ENCODE measurements at regions of chr22 and their contacts with region 1.

Region 1: GRCh38 chr22:27474711-27475547 is 326.6 kb downstream of the MN1 start:
- DNase-seq: peak; percentile 100
- H3K4me3 ChIP-seq: peak overlapping the region in 1 of 3 experiments; percentile 4
- H3K27ac ChIP-seq: peak overlapping the region; percentile 99
- H3K4me1 ChIP-seq: peaks cover 44% of the 10 kb centered on the region
- H3K27me3 ChIP-seq: no peaks in the 10 kb centered on the region
- CTCF ChIP-seq: peak in 1 of 2 donors; percentile 10

Region 2: GRCh38 chr22:27107824-27108223 is 367.1 kb before region 1 on chr22:
- CTCF ChIA-PET with region 1: no interaction called
- dilution Hi-C with region 1: no loop called
- in situ Hi-C with region 1: no loop called
- intact Hi-C with region 1: loop called (anchors 2 kb)
- DNase-seq: peak; percentile 94
- H3K4me3 ChIP-seq: no peak overlapping the region
- H3K27ac ChIP-seq: no peak overlapping the region
- H3K4me1 ChIP-seq: no peaks in the 10 kb centered on the region
- H3K27me3 ChIP-seq: peaks cover 47% of the 10 kb centered on the region
- CTCF ChIP-seq: no peak

Region 3: GRCh38 chr22:27283714-27284113 is 191.2 kb before region 1 on chr22:
- CTCF ChIA-PET with region 1: no interaction called
- dilution Hi-C with region 1: no loop called
- in situ Hi-C with region 1: no loop called
- intact Hi-C with region 1: no loop called
- DNase-seq: no peak
- H3K4me3 ChIP-seq: no peak overlapping the region
- H3K27ac ChIP-seq: no peak overlapping the region
- H3K4me1 ChIP-seq: no peaks in the 10 kb centered on the region
- H3K27me3 ChIP-seq: no peaks in the 10 kb centered on the region
- CTCF ChIP-seq: no peak

Region 4: GRCh38 chr22:27420817-27421361 is 54.0 kb before region 1 on chr22:
- CTCF ChIA-PET with region 1: interaction called, 3 read pairs
- dilution Hi-C with region 1: loop called (anchors 5 kb)
- in situ Hi-C with region 1: no loop called
- intact Hi-C with region 1: loop called (anchors 1 kb)
- DNase-seq: peak; percentile 82
- H3K4me3 ChIP-seq: no peak overlapping the region
- H3K27ac ChIP-seq: peak overlapping the region; percentile 52
- H3K4me1 ChIP-seq: peaks cover 44% of the 10 kb centered on the region
- H3K27me3 ChIP-seq: no peaks in the 10 kb centered on the region
- CTCF ChIP-seq: no peak

Region 5: GRCh38 chr22:27461470-27461869 is 13.5 kb before region 1 on chr22:
- CTCF ChIA-PET with region 1: interaction called, 5 read pairs
- dilution Hi-C with region 1: no loop called
- in situ Hi-C with region 1: no loop called
- intact Hi-C with region 1: loop called (anchors 1 kb)
- DNase-seq: peak; percentile 68
- H3K4me3 ChIP-seq: no peak overlapping the region
- H3K27ac ChIP-seq: no peak overlapping the region
- H3K4me1 ChIP-seq: peaks cover 39% of the 10 kb centered on the region
- H3K27me3 ChIP-seq: no peaks in the 10 kb centered on the region
- CTCF ChIP-seq: no peak

Region 6: DNA sequence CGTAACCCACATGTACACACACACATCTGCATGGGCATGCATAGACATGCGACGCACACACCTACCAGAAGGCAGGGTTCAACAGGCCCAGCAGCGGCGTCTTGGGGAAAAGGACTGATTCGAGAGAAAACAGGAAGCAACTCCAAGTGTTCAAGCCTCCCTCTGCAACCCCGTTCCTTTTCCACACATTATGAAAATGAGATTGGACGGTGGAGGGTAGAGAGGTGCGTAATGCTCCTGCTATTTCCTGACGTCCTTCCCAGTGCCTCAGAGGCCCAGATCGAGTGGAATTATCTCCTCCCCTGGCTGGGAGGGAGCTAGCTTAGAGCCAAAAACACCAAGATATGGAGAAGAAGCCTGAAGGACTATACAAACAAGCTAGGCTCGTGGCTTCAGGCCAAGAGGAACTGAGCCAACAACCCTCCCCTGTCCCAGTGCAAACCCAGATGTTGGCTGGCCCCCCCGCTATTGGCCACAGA is 37.4 kb after region 1 on chr22:
- CTCF ChIA-PET with region 1: no interaction called
- dilution Hi-C with region 1: no loop called
- in situ Hi-C with region 1: no loop called
- intact Hi-C with region 1: loop called (anchors 1 kb)
- DNase-seq: peak; percentile 98
- H3K4me3 ChIP-seq: peak overlapping the region in 2 of 3 experiments; percentile 14 to 21
- H3K27ac ChIP-seq: peak overlapping the region; percentile 81
- H3K4me1 ChIP-seq: peaks cover 28% of the 10 kb centered on the region
- H3K27me3 ChIP-seq: no peaks in the 10 kb centered on the region
- CTCF ChIP-seq: no peak

Region 7: DNA sequence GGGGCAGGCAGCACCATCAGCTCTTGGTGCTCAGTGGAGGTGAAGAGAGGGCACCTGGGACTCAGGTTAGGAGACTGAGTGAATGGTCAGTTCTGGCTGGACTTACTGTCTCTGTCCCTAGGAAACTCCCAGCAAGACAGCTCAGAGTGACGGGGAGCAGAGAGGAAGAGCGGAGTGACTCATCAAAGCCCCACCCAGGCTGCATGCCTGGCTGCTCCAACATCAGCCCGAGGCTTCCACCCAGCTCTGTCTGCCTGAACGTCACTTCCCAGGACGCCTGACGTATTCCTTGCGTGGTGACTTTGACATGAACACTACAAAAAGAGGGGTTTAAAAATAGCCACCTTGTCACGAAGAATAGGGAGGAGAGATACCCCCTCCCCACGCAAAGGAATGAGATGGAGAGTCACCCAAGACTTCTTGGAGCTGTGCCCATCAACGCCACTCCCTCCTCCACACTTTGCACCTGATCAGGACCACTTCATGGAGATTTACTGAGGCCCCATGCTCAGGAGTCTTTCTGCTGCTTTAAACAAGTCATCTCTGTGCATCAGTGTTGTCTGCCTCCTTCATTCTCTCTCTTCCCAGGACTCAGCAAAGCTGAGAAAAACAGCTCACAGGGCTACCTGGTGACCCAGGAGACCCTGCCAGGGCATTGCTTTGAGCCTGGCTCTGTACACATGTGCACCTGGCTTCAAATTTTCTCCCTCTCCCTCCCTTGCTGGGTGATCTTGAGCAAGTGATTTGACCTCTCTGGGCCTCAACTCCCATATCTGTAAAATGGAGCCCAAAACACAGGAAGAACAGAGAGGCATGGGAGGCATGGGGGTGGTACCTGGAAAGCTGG is 243.5 kb after region 1 on chr22:
- CTCF ChIA-PET with region 1: no interaction called
- dilution Hi-C with region 1: no loop called
- in situ Hi-C with region 1: no loop called
- intact Hi-C with region 1: loop called (anchors 1 kb)
- DNase-seq: peak; percentile 96
- H3K4me3 ChIP-seq: no peak overlapping the region
- H3K27ac ChIP-seq: peak overlapping the region; percentile 84
- H3K4me1 ChIP-seq: peaks cover 36% of the 10 kb centered on the region
- H3K27me3 ChIP-seq: no peaks in the 10 kb centered on the region
- CTCF ChIP-seq: no peak

Measured in mammary epithelial cell (primary cell).